ENCODE measurements at regions of chr17 and their contacts with region 1.

Region 1: GRCh38 chr17:73429440-73430164 is 117.8 kb upstream of the CDC42EP4 start:
- DNase-seq: peak; percentile 83 to 89
- ATAC-seq: peak; percentile 90 to 100 (median 97)
- H3K4me3 ChIP-seq: no peak overlapping the region
- H3K4me3 Mint-ChIP-seq: no peak overlapping the region
- H3K27ac ChIP-seq: no peak overlapping the region
- H3K27ac Mint-ChIP-seq: no peak overlapping the region
- H3K4me1 ChIP-seq: peaks cover 4% of the 10 kb centered on the region
- H3K4me1 Mint-ChIP-seq: peaks cover 0 to 4% of the 10 kb centered on the region in 2 donors
- H3K27me3 ChIP-seq: no peaks in the 10 kb centered on the region
- H3K27me3 Mint-ChIP-seq: peaks cover 0 to 3% of the 10 kb centered on the region in 2 donors
- CTCF ChIP-seq: peak; percentile 99

Region 2: GRCh38 chr17:73492821-73493814 is 63.5 kb after region 1 on chr17:
- intact Hi-C with region 1: no loop called
- DNase-seq: no peak
- ATAC-seq: no peak
- H3K4me3 ChIP-seq: no peak overlapping the region
- H3K4me3 Mint-ChIP-seq: no peak overlapping the region
- H3K27ac ChIP-seq: no peak overlapping the region
- H3K27ac Mint-ChIP-seq: no peak overlapping the region
- H3K4me1 ChIP-seq: no peaks in the 10 kb centered on the region
- H3K4me1 Mint-ChIP-seq: no peaks in the 10 kb centered on the region
- H3K27me3 ChIP-seq: no peaks in the 10 kb centered on the region
- H3K27me3 Mint-ChIP-seq: peaks cover 3 to 6% of the 10 kb centered on the region in 2 donors
- CTCF ChIP-seq: no peak

Region 3: GRCh38 chr17:73710095-73710592 is 280.5 kb after region 1 on chr17:
- intact Hi-C with region 1: loop called (anchors 1 kb)
- DNase-seq: peak; percentile 45 to 85
- ATAC-seq: peak; percentile 59 to 79 (median 75)
- H3K4me3 ChIP-seq: no peak overlapping the region
- H3K4me3 Mint-ChIP-seq: no peak overlapping the region
- H3K27ac ChIP-seq: no peak overlapping the region
- H3K27ac Mint-ChIP-seq: no peak overlapping the region
- H3K4me1 ChIP-seq: peaks cover 12% of the 10 kb centered on the region
- H3K4me1 Mint-ChIP-seq: peaks cover 7 to 12% of the 10 kb centered on the region in 2 donors
- H3K27me3 ChIP-seq: peaks cover 4% of the 10 kb centered on the region
- H3K27me3 Mint-ChIP-seq: peaks cover 31 to 60% of the 10 kb centered on the region in 2 donors
- CTCF ChIP-seq: peak; percentile 87

Region 4: GRCh38 chr17:73956669-73957465 is 527.3 kb after region 1 on chr17:
- intact Hi-C with region 1: loop called (anchors 1 kb)
- DNase-seq: peak; percentile 58 to 71
- ATAC-seq: peak; percentile 62 to 72 (median 67)
- H3K4me3 ChIP-seq: no peak overlapping the region
- H3K4me3 Mint-ChIP-seq: no peak overlapping the region
- H3K27ac ChIP-seq: no peak overlapping the region
- H3K27ac Mint-ChIP-seq: no peak overlapping the region
- H3K4me1 ChIP-seq: peaks cover 13% of the 10 kb centered on the region
- H3K4me1 Mint-ChIP-seq: no peaks in the 10 kb centered on the region
- H3K27me3 ChIP-seq: peaks cover 7% of the 10 kb centered on the region
- H3K27me3 Mint-ChIP-seq: no peaks in the 10 kb centered on the region
- CTCF ChIP-seq: peak; percentile 67

Region 5: DNA sequence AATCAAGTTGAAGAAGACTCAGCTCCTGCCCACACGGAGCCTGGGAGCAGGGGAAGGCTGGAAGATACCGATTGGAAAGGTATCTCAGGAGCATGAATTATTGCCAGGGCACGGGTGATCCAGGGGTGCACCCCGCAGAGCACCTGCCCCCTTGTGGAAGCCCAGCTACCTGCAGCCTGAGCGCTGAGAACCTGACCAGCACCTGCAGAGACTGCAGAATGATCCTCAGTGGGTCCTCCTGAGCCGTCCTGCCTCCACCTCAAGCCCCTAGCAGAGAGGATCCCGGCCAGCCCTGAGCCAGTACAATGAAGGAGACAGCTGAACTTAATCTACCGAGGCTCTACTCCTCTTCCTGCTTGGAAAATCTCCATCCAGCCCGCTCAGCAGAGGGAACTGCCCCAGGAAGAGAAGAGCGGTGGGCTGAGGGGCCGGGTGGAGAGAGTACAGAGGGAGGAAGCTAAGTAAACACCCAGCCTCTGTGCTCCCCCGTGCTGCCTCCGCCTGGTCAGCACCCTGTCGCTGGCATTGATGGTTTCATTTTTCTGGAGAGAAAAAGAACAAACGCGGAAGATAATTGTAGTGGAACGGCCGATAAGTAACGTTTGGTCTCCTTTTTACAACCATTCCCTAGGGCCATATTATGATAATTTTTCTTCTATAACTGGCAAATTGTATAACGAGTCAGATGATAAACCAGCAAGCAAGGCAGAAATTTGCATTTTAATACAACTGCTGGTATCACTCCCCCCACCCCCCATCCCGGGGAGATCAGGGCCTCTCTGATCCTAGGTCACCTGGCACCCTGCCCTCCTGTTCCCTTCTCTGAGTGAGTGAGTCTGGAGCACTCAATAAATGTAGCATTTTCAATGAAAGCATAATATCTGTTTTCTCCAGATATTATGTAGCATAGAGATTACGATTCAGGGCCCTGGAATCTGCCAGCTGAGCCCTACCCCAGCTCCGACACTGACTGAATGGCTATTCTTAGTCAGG is 569.3 kb after region 1 on chr17:
- intact Hi-C with region 1: loop called (anchors 1 kb)
- DNase-seq: peak; percentile 54 to 72
- ATAC-seq: peak; percentile 78 to 88 (median 80)
- H3K4me3 ChIP-seq: no peak overlapping the region
- H3K4me3 Mint-ChIP-seq: no peak overlapping the region
- H3K27ac ChIP-seq: no peak overlapping the region
- H3K27ac Mint-ChIP-seq: no peak overlapping the region
- H3K4me1 ChIP-seq: no peaks in the 10 kb centered on the region
- H3K4me1 Mint-ChIP-seq: peaks cover 0 to 5% of the 10 kb centered on the region in 2 donors
- H3K27me3 ChIP-seq: no peaks in the 10 kb centered on the region
- H3K27me3 Mint-ChIP-seq: peaks cover 13 to 29% of the 10 kb centered on the region in 2 donors
- CTCF ChIP-seq: peak; percentile 76

Measured in natural killer cell (primary cell).